Activated CD8-positive, alpha-beta T cell treated with anti-CD3 and anti-CD28 coated beads for 36 hours (primary cell): ENCODE measurements at regions of chr14 and their contacts with region 1.

Region 1: DNA sequence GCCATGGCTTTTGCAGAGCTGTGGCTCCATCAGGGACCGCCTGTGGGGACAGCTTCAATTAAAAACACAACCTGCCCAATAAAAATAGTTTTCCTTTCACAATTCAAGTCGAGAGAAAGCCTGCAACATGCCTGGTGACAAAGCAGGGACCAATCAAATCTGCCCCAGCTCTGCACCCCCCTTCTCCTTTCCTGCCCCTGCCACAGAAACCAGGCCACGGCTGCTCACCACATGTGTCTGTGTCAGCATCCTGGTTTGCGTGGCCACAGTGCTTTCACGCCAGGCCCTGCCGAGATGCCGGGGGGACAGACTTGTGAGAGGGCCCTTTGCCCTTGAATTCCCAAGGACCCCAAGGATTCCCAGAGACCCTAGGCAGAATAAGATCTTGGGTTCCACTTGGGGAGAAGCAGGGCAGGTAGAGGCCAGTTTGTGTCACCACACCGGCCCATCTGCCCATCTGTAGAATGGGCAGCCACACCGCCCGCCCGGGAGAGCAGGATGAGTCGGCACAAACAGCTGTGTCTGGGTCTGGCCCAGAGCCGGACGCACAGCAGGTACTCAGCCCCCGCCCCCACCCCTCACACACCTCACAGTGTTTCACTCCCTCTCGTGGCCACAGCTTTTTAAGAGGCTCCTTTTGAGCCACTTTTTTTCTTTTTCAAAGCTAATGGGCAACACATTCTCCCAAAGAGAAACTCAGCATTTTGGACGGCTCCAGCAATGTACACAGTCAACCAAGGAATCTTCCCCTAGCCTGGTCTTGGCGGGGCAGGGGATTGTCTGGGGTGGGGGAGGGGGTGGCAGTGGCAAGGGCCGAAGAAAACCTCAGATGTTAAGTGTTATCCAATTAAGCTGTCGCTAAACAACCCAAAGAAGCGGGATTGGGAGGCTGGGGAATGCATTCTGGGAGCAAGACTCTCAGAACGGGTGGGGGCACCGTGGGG is 41.5 kb downstream of the BCL11B start:
- DNase-seq: peak; percentile 92
- ATAC-seq: peak; percentile 62
- H3K4me3 Mint-ChIP-seq: peak overlapping the region; percentile 79
- H3K27ac Mint-ChIP-seq: peak overlapping the region; percentile 99
- H3K4me1 Mint-ChIP-seq: peaks cover 92% of the 10 kb centered on the region
- H3K27me3 Mint-ChIP-seq: no peaks in the 10 kb centered on the region
- CTCF ChIP-seq: peak; percentile 54

Region 2: DNA sequence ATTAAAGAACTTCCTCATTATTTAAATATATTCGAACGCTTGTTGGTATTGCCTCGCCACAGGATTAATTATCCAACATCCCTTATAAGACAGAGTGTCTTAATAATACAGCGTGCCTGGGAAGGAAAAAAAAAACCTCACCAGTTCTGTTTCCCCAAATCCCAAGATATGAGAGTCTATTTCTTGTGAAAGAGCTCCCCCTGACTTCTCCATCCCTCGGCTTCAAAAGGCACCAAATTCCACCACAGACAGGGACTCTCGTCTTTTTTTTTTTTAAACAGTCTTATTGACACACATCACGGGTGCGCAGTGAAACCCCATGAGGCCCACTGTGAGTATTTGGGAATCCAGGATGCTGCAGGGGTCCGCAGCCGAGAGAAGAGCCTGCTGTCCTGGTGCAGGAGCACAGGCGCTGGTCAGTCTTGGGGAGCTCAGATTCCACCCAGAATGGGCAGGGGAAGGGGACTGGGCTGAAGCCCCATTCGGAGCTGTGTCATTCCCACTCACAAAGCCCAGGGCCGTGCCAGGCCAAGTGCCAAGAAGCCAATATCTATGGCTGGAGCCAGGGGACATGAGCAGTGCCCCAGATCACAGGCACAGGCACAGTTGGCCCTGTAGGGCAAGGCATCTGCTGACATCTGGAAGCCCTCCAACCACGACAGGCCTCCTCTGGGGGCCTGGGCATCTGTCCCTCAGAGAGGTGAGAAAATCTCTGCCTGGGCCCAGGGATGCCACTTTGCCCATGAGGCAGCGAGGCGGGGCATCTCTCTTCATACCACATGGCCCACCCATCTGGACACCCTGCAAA is 30.4 kb before region 1 on chr14:
- CTCF ChIA-PET with region 1: interaction called, 18 read pairs
- POLR2A ChIA-PET with region 1: interaction called, 23 read pairs
- intact Hi-C with region 1: no loop called
- DNase-seq: no peak
- ATAC-seq: no peak
- H3K4me3 Mint-ChIP-seq: peak overlapping the region; percentile 29
- H3K27ac Mint-ChIP-seq: peak overlapping the region; percentile 98
- H3K4me1 Mint-ChIP-seq: peaks cover 99% of the 10 kb centered on the region
- H3K27me3 Mint-ChIP-seq: no peaks in the 10 kb centered on the region
- CTCF ChIP-seq: no peak

Region 3: DNA sequence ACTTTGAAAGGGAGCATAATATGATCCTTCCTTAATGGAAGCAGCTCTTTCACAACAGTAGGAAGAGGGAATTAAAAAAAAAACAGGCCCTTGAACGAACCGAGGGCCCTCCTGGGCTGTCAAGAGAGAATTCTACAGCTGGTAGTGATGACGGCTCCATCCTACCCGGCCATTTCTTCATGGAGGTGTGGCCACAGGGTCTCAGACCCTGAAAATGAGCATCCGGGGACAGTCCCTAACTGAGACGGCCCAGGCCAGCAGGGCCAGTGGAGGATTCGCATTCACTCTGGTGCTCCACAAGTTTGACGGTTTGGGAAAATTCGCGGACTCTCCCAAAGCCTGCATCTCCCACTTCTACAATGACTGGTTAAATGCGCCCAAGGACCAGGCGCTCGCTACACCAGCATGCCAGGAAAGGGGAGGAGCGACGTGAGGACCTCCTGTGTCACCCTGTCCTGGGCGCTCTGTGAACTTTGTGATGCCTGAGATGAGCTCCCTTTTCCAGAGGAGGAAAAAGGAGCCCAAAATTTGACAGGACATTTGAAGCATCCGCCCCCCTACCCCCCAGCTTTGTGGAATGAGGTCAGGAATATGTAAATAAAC is 25.3 kb before region 1 on chr14:
- CTCF ChIA-PET with region 1: interaction called, 18 read pairs
- POLR2A ChIA-PET with region 1: interaction called, 23 read pairs
- intact Hi-C with region 1: no loop called
- DNase-seq: peak; percentile 55
- ATAC-seq: peak; percentile 38
- H3K4me3 Mint-ChIP-seq: peak overlapping the region; percentile 54
- H3K27ac Mint-ChIP-seq: peak overlapping the region; percentile 98
- H3K4me1 Mint-ChIP-seq: peaks cover 100% of the 10 kb centered on the region
- H3K27me3 Mint-ChIP-seq: no peaks in the 10 kb centered on the region
- CTCF ChIP-seq: no peak

Region 4: DNA sequence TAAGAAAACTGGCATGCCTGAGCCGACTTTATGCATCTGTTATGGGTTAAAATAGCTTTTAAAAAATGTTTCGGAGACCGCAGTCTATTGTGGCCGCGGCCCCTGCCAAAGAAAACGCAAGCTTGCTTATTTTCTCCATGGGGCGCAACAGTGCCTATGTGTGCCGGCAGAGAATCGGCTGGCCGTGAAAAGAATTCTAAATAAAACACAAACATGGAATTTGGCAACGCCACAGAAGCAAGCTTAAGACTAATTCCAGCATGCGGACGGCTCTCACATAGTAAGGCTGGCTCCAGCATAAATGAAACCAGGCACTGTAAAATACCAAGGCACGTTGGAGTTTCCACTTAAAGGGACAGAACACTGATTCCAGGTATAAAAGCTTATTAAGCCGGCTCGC is 15.2 kb before region 1 on chr14:
- CTCF ChIA-PET with region 1: interaction called, 19 read pairs
- POLR2A ChIA-PET with region 1: interaction called, 92 read pairs
- intact Hi-C with region 1: no loop called
- DNase-seq: no peak
- ATAC-seq: no peak
- H3K4me3 Mint-ChIP-seq: peak overlapping the region; percentile 64
- H3K27ac Mint-ChIP-seq: peak overlapping the region; percentile 98
- H3K4me1 Mint-ChIP-seq: peaks cover 93% of the 10 kb centered on the region
- H3K27me3 Mint-ChIP-seq: no peaks in the 10 kb centered on the region
- CTCF ChIP-seq: no peak

Region 5: GRCh38 chr14:99245564-99246511 is 15.4 kb after region 1 on chr14:
- CTCF ChIA-PET with region 1: interaction called, 24 read pairs
- POLR2A ChIA-PET with region 1: interaction called, 80 read pairs
- intact Hi-C with region 1: no loop called
- DNase-seq: no peak
- ATAC-seq: no peak
- H3K4me3 Mint-ChIP-seq: peak overlapping the region; percentile 79
- H3K27ac Mint-ChIP-seq: peak overlapping the region; percentile 99
- H3K4me1 Mint-ChIP-seq: peaks cover 64% of the 10 kb centered on the region
- H3K27me3 Mint-ChIP-seq: no peaks in the 10 kb centered on the region
- CTCF ChIP-seq: no peak

Region 6: DNA sequence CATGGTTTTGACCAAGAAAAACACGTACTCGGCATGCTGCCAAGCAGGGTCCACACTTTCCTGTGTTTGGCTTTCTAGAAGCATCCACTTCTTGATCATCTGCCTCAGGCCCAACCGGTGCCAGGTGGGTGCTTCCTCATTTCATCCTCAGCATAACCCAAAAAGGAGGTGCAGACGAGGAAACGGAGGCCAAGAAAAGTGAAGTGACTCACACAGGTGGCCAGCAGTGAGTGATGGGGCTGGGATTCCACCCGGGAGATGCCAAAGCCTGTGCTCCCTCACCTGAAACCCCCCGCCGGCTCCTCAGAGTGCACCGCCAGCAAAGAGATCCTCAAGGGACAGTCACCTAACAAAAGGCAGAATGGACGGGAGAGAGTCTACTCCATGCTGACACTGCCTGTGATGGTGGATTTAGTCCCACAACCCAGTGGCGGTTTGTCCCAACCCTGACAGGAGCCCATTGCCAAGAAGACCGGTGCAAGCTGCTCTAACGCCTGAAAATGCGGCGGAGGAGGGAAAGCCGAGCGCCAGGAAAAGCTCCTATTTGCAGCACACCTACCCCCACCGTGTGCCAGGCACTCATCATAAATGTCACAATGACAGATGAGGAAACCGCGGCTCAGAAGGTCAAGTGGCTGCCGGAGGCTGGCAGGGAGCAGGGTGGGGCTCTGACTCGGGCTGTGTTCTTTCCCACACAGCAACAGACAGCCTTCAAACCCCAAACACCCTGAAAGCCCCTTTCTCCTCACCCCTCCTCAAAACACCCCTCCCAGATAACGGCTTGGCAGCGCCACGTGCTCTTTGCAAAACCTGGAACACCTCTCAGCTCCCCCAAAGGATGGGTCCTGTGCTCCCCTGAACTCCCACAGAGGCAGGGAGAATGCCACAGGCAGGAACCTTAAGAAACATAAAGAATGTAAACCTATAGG is 22.7 kb after region 1 on chr14:
- CTCF ChIA-PET with region 1: interaction called, 14 read pairs
- POLR2A ChIA-PET with region 1: interaction called, 131 read pairs
- intact Hi-C with region 1: no loop called
- DNase-seq: peak; percentile 87
- ATAC-seq: peak; percentile 62
- H3K4me3 Mint-ChIP-seq: peak overlapping the region; percentile 86
- H3K27ac Mint-ChIP-seq: peak overlapping the region; percentile 95
- H3K4me1 Mint-ChIP-seq: peaks cover 88% of the 10 kb centered on the region
- H3K27me3 Mint-ChIP-seq: no peaks in the 10 kb centered on the region
- CTCF ChIP-seq: no peak

Region 7: DNA sequence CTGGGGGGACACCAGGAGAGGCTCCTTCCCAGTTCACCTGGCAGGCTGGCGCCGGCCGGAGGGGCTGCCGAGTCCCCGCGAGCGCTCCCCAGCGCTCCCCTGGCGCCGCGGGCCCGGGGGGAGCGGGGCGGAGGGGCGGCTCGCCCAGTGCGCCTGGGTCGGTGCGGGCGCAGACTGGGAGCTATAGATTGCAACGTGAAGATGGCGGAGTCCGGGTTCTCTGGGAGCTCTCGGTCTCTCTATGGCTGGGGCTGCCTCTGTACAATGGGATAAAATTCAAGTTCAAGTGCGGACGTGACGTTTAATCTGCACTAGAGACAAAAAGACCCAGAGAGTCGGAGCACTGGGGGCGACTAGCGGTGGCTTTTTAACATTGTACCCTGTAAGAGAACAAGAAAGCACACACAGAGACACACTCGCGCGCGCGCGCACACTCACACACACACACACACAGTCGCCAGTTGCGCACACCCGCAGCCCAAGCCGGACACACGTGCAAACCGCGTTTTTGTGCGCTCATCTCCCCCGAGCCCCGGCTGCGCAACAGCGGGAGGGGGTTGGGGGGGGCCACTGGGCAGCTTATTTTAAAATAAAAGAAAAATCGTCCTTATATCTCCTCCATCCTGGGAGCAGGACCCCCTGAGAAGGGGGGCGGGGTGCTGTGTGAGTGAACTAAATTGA is 41.6 kb after region 1 on chr14 and contains the start of gene BCL11B:
- CTCF ChIA-PET with region 1: interaction called, 189 read pairs
- POLR2A ChIA-PET with region 1: interaction called, 496 read pairs
- intact Hi-C with region 1: no loop called
- DNase-seq: peak; percentile 98
- ATAC-seq: peak; percentile 72
- H3K4me3 Mint-ChIP-seq: peak within 1 kb of the TSS; percentile 86
- H3K27ac Mint-ChIP-seq: peak within 1 kb of the TSS; percentile 96
- H3K4me1 Mint-ChIP-seq: peaks cover 23% of the 10 kb centered on the region
- H3K27me3 Mint-ChIP-seq: peaks cover 2% of the 10 kb centered on the region
- CTCF ChIP-seq: peak; percentile 67
- total RNA-seq, gene BCL11B: 48.5 to 53.0 TPM